CD4-positive, alpha-beta T cell (primary cell): ENCODE measurements at regions of chr10 and their contacts with region 1.

Region 1: DNA sequence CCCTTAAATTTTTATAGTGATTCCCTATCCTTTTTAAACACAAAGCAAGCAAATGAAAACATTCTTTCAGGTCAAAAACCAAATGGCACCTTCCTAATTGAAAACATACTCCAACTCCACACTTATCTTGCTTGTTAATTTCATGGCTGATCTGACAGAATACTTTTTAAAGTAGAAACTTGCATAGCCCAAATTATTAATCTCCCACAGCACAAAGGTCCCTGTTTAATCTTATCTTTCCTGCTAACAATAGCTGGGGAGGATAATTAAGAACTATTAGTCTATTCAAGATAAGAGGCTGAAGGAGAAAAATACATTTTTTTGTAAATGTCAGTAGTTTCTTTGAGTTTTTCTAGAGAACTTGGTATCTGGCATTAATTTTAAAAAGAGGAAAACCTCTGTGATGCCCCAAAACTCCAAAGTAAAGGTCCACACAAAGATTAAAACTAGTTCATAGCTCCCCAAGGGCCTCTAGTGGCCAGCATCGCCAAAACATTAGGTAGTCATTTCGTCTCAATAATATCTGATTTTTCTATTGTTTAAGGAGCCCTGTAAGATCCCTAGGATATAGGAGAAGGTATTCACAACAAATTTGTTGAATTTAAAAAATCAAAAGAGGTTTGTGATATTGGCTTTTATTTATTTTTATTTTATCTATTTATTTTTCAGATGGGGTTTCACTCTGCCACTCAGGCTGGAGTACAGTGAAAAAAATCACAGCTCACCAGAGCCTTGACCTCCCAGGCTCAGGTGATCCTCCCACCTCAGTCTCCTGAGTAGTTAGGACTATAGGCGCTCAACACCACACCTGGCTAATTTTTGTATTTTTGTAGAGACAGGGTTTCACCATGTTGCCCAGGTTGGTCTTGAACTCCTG is 14.7 kb downstream of the CDNF start:
- DNase-seq: peak in 13 of 14 experiments; percentile 15 to 67 (median 37)
- ATAC-seq: peak; percentile 56
- H3K4me3 ChIP-seq: no peak overlapping the region
- H3K4me3 Mint-ChIP-seq: no peak overlapping the region
- H3K27ac ChIP-seq: no peak overlapping the region
- H3K27ac Mint-ChIP-seq: no peak overlapping the region
- H3K4me1 ChIP-seq: no peaks in the 10 kb centered on the region
- H3K4me1 Mint-ChIP-seq: peaks cover 4% of the 10 kb centered on the region
- H3K27me3 ChIP-seq: no peaks in the 10 kb centered on the region
- H3K27me3 Mint-ChIP-seq: no peaks in the 10 kb centered on the region
- CTCF ChIP-seq: peak; percentile 76

Region 2: GRCh38 chr10:14191871-14192270 is 631.2 kb before region 1 on chr10:
- CTCF ChIA-PET with region 1: interaction called, 6 read pairs
- POLR2A ChIA-PET with region 1: no interaction called
- intact Hi-C with region 1: loop called in 1 of 2 experiments (anchors 5 kb)
- DNase-seq: no peak
- ATAC-seq: no peak
- H3K4me3 ChIP-seq: no peak overlapping the region
- H3K4me3 Mint-ChIP-seq: no peak overlapping the region
- H3K27ac ChIP-seq: no peak overlapping the region
- H3K27ac Mint-ChIP-seq: no peak overlapping the region
- H3K4me1 ChIP-seq: no peaks in the 10 kb centered on the region
- H3K4me1 Mint-ChIP-seq: no peaks in the 10 kb centered on the region
- H3K27me3 ChIP-seq: peaks cover 2 to 9% of the 10 kb centered on the region in 2 experiments
- H3K27me3 Mint-ChIP-seq: peaks cover 19% of the 10 kb centered on the region
- CTCF ChIP-seq: no peak

Region 3: GRCh38 chr10:14499601-14499904 is 323.6 kb before region 1 on chr10:
- CTCF ChIA-PET with region 1: no interaction called
- POLR2A ChIA-PET with region 1: no interaction called
- intact Hi-C with region 1: loop called (anchors 1 kb)
- DNase-seq: no peak
- ATAC-seq: no peak
- H3K4me3 ChIP-seq: no peak overlapping the region
- H3K4me3 Mint-ChIP-seq: no peak overlapping the region
- H3K27ac ChIP-seq: no peak overlapping the region
- H3K27ac Mint-ChIP-seq: no peak overlapping the region
- H3K4me1 ChIP-seq: peaks cover 9% of the 10 kb centered on the region
- H3K4me1 Mint-ChIP-seq: peaks cover 4% of the 10 kb centered on the region
- H3K27me3 ChIP-seq: no peaks in the 10 kb centered on the region
- H3K27me3 Mint-ChIP-seq: no peaks in the 10 kb centered on the region
- CTCF ChIP-seq: no peak

Region 4: GRCh38 chr10:14536241-14537213 is 286.6 kb before region 1 on chr10:
- CTCF ChIA-PET with region 1: interaction called, 9 read pairs
- POLR2A ChIA-PET with region 1: interaction called, 5 read pairs
- intact Hi-C with region 1: loop called (anchors 5 kb)
- DNase-seq: peak in 9 of 14 experiments; percentile 25 to 72 (median 48)
- ATAC-seq: peak; percentile 21
- H3K4me3 ChIP-seq: no peak overlapping the region
- H3K4me3 Mint-ChIP-seq: no peak overlapping the region
- H3K27ac ChIP-seq: no peak overlapping the region
- H3K27ac Mint-ChIP-seq: peak overlapping the region; percentile 65
- H3K4me1 ChIP-seq: peaks cover 72% of the 10 kb centered on the region
- H3K4me1 Mint-ChIP-seq: peaks cover 96% of the 10 kb centered on the region
- H3K27me3 ChIP-seq: no peaks in the 10 kb centered on the region
- H3K27me3 Mint-ChIP-seq: no peaks in the 10 kb centered on the region
- CTCF ChIP-seq: peak; percentile 64

Region 5: GRCh38 chr10:15245530-15245929 is 422.4 kb after region 1 on chr10:
- CTCF ChIA-PET with region 1: no interaction called
- POLR2A ChIA-PET with region 1: no interaction called
- intact Hi-C with region 1: no loop called
- DNase-seq: peak in 5 of 14 experiments; percentile 20 to 47 (median 34)
- ATAC-seq: peak; percentile 59
- H3K4me3 ChIP-seq: no peak overlapping the region
- H3K4me3 Mint-ChIP-seq: no peak overlapping the region
- H3K27ac ChIP-seq: no peak overlapping the region
- H3K27ac Mint-ChIP-seq: no peak overlapping the region
- H3K4me1 ChIP-seq: no peaks in the 10 kb centered on the region
- H3K4me1 Mint-ChIP-seq: peaks cover 13% of the 10 kb centered on the region
- H3K27me3 ChIP-seq: no peaks in the 10 kb centered on the region
- H3K27me3 Mint-ChIP-seq: no peaks in the 10 kb centered on the region
- CTCF ChIP-seq: peak; percentile 30